ENCODE measurements at regions of chr7 and their contacts with region 1.

Region 1: DNA sequence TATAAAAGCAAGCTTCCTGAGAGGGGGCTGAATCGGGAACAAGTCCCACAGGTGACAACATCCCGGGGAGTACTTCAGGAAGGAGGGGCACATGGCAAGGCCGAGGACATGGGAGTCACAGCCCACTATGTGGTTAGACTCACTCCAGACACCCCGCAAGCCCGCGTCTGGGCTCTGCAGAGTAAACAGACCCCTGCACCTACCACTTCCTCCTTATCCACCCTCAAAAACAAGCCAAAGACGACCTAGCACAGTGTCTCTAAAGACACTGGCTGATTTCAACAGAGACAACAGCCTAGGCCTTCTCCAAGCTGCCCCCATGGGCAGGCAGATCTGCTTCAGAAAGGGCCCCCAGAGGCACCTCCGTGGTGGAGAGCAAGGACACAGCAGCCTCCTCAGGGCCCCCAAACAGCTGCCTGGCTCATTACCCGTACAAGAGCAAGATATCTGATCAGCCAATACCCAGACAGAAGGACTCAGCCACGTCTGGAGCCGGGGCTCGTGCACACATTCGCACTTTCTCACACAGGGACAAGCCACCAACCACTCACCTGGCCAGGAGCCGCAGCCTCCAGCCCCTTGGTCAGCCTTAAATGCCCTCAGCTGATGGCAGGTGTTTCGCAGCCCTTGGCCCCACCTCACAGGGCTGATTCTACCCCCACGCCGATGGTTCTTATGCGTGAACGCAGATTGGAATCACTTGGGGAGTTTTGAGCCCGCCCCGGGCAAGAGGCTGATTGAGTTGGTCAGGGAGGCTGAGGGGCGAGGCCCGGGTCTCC is 10.7 kb upstream of the KPNA7 start:
- DNase-seq: no peak
- H3K4me3 ChIP-seq: no peak overlapping the region
- H3K27ac ChIP-seq: no peak overlapping the region
- H3K4me1 ChIP-seq: no peaks in the 10 kb centered on the region
- H3K27me3 ChIP-seq: no peaks in the 10 kb centered on the region
- CTCF ChIP-seq: no peak

Region 2: DNA sequence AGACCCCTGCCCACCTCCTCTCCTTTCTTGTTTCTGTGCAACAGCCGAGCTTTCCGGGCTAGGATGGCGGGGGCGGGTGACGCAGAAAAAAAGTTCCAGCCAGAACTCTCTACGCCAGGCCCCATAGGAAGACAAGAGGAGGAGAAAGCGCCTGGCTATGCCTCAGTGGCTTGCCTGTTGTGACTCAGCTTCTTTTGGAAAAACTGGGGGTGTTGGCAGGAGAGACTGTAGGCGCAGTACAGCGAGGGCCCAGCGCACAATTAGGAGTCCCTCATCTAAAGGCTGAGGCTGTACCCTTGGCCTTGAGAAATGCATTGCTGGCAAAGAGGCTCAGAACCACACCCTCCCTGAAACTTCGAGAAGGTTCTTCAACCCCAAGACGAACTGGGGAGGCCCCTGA is 17.3 kb after region 1 on chr7:
- CTCF ChIA-PET with region 1: interaction called, 15 read pairs
- dilution Hi-C with region 1: no loop called
- in situ Hi-C with region 1: no loop called
- intact Hi-C with region 1: no loop called
- DNase-seq: no peak
- H3K4me3 ChIP-seq: no peak overlapping the region
- H3K27ac ChIP-seq: no peak overlapping the region
- H3K4me1 ChIP-seq: no peaks in the 10 kb centered on the region
- H3K27me3 ChIP-seq: no peaks in the 10 kb centered on the region
- CTCF ChIP-seq: no peak

Measured in mammary epithelial cell (primary cell).